ENCODE measurements at regions of chr2 and their contacts with region 1.

Region 1: DNA sequence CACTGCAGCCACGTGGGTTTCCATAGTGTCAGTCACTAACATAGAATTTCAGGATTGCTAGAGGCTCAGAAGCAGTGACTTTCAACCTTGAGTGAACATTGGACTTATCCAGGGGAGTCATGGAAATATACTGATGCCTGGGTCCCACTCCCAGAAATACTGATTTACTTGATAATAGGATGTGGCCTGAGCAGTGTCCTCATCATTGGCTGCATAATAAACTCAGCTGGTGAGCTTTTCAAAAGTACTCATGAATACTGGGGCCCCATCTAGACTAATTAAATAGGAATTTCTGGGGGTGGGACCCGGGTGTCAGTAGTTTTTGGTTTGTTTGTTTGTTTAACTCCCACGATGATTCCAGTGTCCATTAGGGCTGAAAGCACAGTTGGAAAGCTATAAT is 141.4 kb downstream of the COL4A4 start:
- DNase-seq: peak; percentile 42
- ATAC-seq: peak; percentile 48
- H3K4me3 ChIP-seq: no peak overlapping the region
- H3K27ac ChIP-seq: no peak overlapping the region
- H3K4me1 ChIP-seq: no peaks in the 10 kb centered on the region
- H3K27me3 ChIP-seq: no peaks in the 10 kb centered on the region
- CTCF ChIP-seq: no peak
- POLR2A ChIP-seq: no peak
- RAD21 ChIP-seq: no peak

Region 2: GRCh38 chr2:226963528-226963927 is 59.1 kb before region 1 on chr2:
- CTCF ChIA-PET with region 1: no interaction called
- POLR2A ChIA-PET with region 1: no interaction called
- dilution Hi-C with region 1: no loop called
- in situ Hi-C with region 1: no loop called
- intact Hi-C with region 1: no loop called
- DNase-seq: peak; percentile 73
- ATAC-seq: peak; percentile 96
- H3K4me3 ChIP-seq: no peak overlapping the region
- H3K27ac ChIP-seq: no peak overlapping the region
- H3K4me1 ChIP-seq: peaks cover 2% of the 10 kb centered on the region; the same call in 1 of the 2 replicates
- H3K27me3 ChIP-seq: no peaks in the 10 kb centered on the region
- CTCF ChIP-seq: no peak
- POLR2A ChIP-seq: no peak
- RAD21 ChIP-seq: no peak

Region 3: DNA sequence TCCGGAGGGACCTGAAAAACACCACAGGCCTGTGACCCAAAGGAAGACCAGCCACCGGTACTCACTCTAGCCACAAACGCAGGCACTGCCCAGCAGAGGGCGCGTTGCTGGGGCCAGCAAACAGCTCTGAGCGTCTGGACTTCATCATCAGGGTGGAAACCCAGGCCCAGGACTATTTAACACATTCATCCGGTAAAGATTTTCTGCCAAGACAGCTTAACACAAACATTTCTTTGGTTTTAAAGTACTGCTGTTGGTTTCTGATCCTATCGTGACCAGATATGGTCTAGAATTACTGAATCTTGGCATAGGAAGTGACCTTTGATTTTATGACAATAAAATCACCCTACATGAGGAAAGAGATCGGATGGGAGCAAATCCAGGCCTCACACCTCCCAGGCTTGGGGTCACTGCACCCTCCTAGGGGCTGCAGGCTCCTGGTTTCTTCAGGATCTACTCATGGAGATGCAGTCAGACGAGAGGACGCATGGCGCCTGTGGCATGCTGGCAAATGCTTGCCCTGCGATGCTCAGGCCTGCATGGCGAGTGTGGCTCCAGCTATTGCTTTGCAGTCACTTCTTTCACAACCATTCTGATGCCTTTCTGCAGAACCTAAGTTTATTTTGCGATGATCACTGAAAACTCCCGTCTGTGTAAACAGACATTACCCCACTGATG is 11.0 kb after region 1 on chr2:
- CTCF ChIA-PET with region 1: interaction called, 10 read pairs
- POLR2A ChIA-PET with region 1: no interaction called
- dilution Hi-C with region 1: no loop called
- in situ Hi-C with region 1: no loop called
- intact Hi-C with region 1: no loop called
- DNase-seq: peak; percentile 32
- ATAC-seq: peak; percentile 91
- H3K4me3 ChIP-seq: no peak overlapping the region
- H3K27ac ChIP-seq: no peak overlapping the region
- H3K4me1 ChIP-seq: no peaks in the 10 kb centered on the region
- H3K27me3 ChIP-seq: peaks cover 7% of the 10 kb centered on the region
- CTCF ChIP-seq: peak; percentile 49
- POLR2A ChIP-seq: no peak
- RAD21 ChIP-seq: 0 out of 2 replicates have a peak, but pooled peaks have one; percentile 16